ENCODE measurements at regions of chr1 and their contacts with region 1.

Region 1: GRCh38 chr1:108559215-108560186 is at the start of gene EEIG2:
- DNase-seq: peak; percentile 88 to 92 (median 90)
- H3K4me3 ChIP-seq: peak within 1 kb of the TSS; percentile 15 to 59
- H3K4me3 Mint-ChIP-seq: peak within 1 kb of the TSS; percentile 91 to 98 (median 96)
- H3K27ac ChIP-seq: peak within 1 kb of the TSS; percentile 65
- H3K27ac Mint-ChIP-seq: peak within 1 kb of the TSS; percentile 90 to 97 (median 95)
- H3K4me1 ChIP-seq: peaks cover 49% of the 10 kb centered on the region
- H3K4me1 Mint-ChIP-seq: peaks cover 25 to 45% (median 28%) of the 10 kb centered on the region in 4 donors
- H3K27me3 ChIP-seq: no peaks in the 10 kb centered on the region
- H3K27me3 Mint-ChIP-seq: no peaks in the 10 kb centered on the region
- total RNA-seq, gene EEIG2: 9.2 to 10.7 TPM

Region 2: DNA sequence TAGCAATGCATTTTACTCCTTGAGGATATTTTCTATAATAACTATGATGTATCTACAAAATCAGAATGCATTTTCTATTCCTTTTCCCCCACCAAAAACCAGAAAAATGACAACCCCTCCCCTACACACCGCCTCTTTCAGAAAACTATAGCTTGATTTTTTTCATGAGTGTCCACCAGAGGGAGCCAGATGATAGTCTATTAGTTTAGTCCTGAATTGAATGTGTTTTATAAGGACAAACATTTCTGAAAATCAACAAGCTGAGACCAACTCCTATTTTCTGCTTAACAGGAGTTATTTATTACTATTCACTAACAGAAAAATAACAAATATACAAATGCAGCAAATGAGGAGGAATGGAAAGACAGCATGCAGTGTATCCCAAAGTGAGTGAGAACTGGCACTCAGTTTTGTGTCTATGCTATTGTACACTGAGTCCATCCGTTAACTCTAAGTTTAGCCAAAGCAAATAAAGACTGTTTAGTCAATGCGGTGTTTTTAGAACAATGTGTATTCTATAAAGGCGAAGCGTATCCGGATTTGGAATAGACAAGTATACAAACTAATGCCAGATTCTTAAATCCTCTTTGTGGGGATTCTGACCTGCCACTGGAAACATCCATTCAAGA is 777.2 kb before region 1 on chr1:
- CTCF ChIA-PET with region 1: no interaction called
- POLR2A ChIA-PET with region 1: no interaction called
- intact Hi-C with region 1: loop called (anchors 2 kb)
- DNase-seq: peak; percentile 44 to 71 (median 61)
- H3K4me3 ChIP-seq: no peak overlapping the region
- H3K4me3 Mint-ChIP-seq: no peak overlapping the region
- H3K27ac ChIP-seq: no peak overlapping the region
- H3K27ac Mint-ChIP-seq: no peak overlapping the region
- H3K4me1 ChIP-seq: peaks cover 29% of the 10 kb centered on the region
- H3K4me1 Mint-ChIP-seq: peaks cover 16 to 33% (median 25%) of the 10 kb centered on the region in 4 donors
- H3K27me3 ChIP-seq: no peaks in the 10 kb centered on the region
- H3K27me3 Mint-ChIP-seq: no peaks in the 10 kb centered on the region

Region 3: DNA sequence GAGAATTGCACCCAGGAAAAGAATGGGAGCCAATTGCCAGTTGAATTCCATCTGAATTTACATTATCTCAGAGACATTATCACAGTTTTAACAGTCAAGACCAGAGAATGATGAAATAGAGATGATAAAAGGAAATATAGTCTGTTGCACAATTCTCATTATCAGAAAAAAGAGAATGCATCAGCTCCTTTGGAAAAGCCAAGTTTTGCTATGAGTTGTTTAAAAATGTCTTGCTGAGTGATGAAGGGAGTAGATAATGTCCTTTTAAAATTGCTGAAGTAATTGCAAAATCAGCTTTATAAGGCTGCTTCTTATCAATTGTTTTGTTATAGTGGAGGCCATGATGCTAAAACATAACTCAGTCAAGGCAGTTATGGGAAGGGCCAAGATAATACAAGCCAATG is 37.5 kb before region 1 on chr1:
- CTCF ChIA-PET with region 1: interaction called, 225 read pairs
- POLR2A ChIA-PET with region 1: interaction called, 3 read pairs
- intact Hi-C with region 1: no loop called
- DNase-seq: no peak
- H3K4me3 ChIP-seq: no peak overlapping the region
- H3K4me3 Mint-ChIP-seq: no peak overlapping the region
- H3K27ac ChIP-seq: no peak overlapping the region
- H3K27ac Mint-ChIP-seq: no peak overlapping the region
- H3K4me1 ChIP-seq: no peaks in the 10 kb centered on the region
- H3K4me1 Mint-ChIP-seq: no peaks in the 10 kb centered on the region
- H3K27me3 ChIP-seq: no peaks in the 10 kb centered on the region
- H3K27me3 Mint-ChIP-seq: peaks cover 8 to 12% of the 10 kb centered on the region in 2 donors

Region 4: DNA sequence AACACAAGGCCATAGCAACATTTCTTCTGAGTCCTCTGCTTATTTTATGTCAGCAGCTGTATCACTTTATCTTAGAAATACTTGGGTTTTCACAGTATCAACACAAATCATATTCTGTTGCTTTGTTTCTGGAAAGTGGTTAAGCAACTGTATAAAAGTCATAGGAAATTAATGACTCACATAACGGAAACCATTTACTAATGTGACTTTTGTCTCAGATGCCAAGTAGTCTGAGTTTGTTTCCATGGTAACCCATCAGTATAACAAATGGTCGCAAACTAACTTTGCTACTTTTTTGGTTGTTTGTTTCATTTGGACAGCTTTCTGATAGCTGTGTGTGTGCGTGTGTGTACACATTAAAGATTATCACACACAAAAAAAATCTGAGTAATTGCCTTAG is 31.5 kb after region 1 on chr1:
- CTCF ChIA-PET with region 1: interaction called, 22 read pairs
- POLR2A ChIA-PET with region 1: interaction called, 20 read pairs
- intact Hi-C with region 1: loop called (anchors 1 kb)
- DNase-seq: peak; percentile 67 to 86 (median 81)
- H3K4me3 ChIP-seq: no peak overlapping the region
- H3K4me3 Mint-ChIP-seq: peak overlapping the region in 4 of 8 donors; percentile 2 to 58 (median 28)
- H3K27ac ChIP-seq: peak overlapping the region; percentile 51
- H3K27ac Mint-ChIP-seq: peak overlapping the region; percentile 86 to 96 (median 89)
- H3K4me1 ChIP-seq: peaks cover 45% of the 10 kb centered on the region
- H3K4me1 Mint-ChIP-seq: peaks cover 31 to 56% (median 43%) of the 10 kb centered on the region in 4 donors
- H3K27me3 ChIP-seq: no peaks in the 10 kb centered on the region
- H3K27me3 Mint-ChIP-seq: no peaks in the 10 kb centered on the region

Region 5: GRCh38 chr1:108708691-108709660 is 149.5 kb after region 1 on chr1:
- CTCF ChIA-PET with region 1: interaction called, 22 read pairs
- POLR2A ChIA-PET with region 1: interaction called, 8 read pairs
- intact Hi-C with region 1: loop called (anchors 2 kb)
- DNase-seq: peak; percentile 65 to 70 (median 67)
- H3K4me3 ChIP-seq: no peak overlapping the region
- H3K4me3 Mint-ChIP-seq: peak overlapping the region in 1 of 8 donors; percentile 7
- H3K27ac ChIP-seq: no peak overlapping the region
- H3K27ac Mint-ChIP-seq: peak overlapping the region in 6 of 7 donors; percentile 32 to 63 (median 61)
- H3K4me1 ChIP-seq: peaks cover 35% of the 10 kb centered on the region
- H3K4me1 Mint-ChIP-seq: peaks cover 19 to 45% (median 35%) of the 10 kb centered on the region in 4 donors
- H3K27me3 ChIP-seq: no peaks in the 10 kb centered on the region
- H3K27me3 Mint-ChIP-seq: no peaks in the 10 kb centered on the region

Region 6: DNA sequence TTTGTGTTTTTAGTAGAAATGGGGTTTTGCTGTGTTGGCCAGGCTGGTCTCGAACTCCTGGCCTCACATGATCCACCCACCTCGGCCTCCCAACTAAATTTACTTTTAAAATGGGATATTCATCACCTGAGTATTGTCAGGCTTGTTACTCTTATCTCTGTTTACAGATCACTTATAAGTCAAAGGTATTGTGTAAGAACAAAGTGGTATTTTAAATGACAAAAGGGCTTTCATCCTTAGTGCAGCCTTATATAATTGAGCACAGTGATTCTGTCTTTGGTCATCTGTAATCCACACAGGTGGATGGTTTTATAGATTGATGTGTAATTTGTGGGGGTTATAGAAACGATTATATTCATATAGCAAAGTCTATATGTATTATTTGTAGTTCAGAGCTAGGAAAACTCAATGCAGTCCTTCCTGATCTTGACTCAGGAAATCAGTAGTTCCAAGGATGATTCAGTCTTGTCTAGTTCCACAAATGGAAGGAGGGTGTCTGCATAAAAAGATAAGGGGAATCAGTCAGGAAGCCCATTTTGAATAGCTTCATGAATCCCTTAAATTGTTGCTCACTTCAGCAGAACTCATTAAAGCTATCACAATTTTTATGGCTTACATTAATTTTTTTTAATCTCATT is 221.6 kb after region 1 on chr1:
- CTCF ChIA-PET with region 1: no interaction called
- POLR2A ChIA-PET with region 1: no interaction called
- intact Hi-C with region 1: no loop called
- DNase-seq: no peak
- H3K4me3 ChIP-seq: no peak overlapping the region
- H3K4me3 Mint-ChIP-seq: no peak overlapping the region
- H3K27ac ChIP-seq: no peak overlapping the region
- H3K27ac Mint-ChIP-seq: peak overlapping the region in 2 of 7 donors; percentile 36 to 39
- H3K4me1 ChIP-seq: no peaks in the 10 kb centered on the region
- H3K4me1 Mint-ChIP-seq: peaks cover 0 to 3% (median under 1%) of the 10 kb centered on the region in 4 donors
- H3K27me3 ChIP-seq: no peaks in the 10 kb centered on the region
- H3K27me3 Mint-ChIP-seq: no peaks in the 10 kb centered on the region

Region 7: DNA sequence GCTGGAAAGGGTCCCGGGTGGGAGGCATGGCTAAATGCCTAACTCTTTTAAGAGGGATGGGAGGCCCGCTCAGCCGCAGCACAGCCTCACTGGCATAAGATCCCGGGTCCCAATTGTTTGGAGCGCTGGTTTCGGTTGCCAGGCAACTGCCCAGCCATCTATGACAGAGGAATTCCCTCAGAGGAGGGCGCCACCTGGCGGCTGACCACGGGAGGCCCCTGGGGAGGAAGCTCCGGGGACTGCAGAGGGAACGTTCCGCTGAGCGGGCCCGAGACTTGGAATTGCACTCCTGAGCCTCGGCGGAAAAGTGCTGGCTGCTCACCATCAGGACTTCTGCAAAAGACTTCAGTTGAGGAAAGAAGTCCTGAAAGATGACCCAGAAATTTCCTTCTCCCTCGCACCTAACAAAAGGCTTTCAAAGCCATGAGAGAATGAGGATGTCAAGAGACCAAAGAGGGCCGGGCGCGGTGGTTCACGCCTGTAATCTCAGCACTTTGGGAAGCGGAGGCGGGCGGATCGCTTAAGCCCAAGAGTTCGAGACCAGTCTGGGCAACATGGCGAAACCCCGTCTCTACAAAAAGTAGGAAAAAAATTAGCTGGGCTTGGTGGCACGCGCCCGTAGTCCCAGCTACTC is 553.3 kb after region 1 on chr1:
- CTCF ChIA-PET with region 1: no interaction called
- POLR2A ChIA-PET with region 1: no interaction called
- intact Hi-C with region 1: loop called (anchors 10 kb)
- DNase-seq: peak; percentile 86 to 89 (median 87)
- H3K4me3 ChIP-seq: peak overlapping the region in 1 of 2 donors; percentile 64
- H3K4me3 Mint-ChIP-seq: peak overlapping the region; percentile 86 to 94 (median 90)
- H3K27ac ChIP-seq: peak overlapping the region; percentile 61
- H3K27ac Mint-ChIP-seq: peak overlapping the region; percentile 94 to 99 (median 98)
- H3K4me1 ChIP-seq: peaks cover 24% of the 10 kb centered on the region
- H3K4me1 Mint-ChIP-seq: peaks cover 23 to 35% (median 28%) of the 10 kb centered on the region in 4 donors
- H3K27me3 ChIP-seq: no peaks in the 10 kb centered on the region
- H3K27me3 Mint-ChIP-seq: peaks cover 0 to 2% of the 10 kb centered on the region in 2 donors

Measured in CD4-positive, alpha-beta memory T cell (primary cell).